ENCODE measurements at regions of chr2 and their contacts with region 1.

Region 1: DNA sequence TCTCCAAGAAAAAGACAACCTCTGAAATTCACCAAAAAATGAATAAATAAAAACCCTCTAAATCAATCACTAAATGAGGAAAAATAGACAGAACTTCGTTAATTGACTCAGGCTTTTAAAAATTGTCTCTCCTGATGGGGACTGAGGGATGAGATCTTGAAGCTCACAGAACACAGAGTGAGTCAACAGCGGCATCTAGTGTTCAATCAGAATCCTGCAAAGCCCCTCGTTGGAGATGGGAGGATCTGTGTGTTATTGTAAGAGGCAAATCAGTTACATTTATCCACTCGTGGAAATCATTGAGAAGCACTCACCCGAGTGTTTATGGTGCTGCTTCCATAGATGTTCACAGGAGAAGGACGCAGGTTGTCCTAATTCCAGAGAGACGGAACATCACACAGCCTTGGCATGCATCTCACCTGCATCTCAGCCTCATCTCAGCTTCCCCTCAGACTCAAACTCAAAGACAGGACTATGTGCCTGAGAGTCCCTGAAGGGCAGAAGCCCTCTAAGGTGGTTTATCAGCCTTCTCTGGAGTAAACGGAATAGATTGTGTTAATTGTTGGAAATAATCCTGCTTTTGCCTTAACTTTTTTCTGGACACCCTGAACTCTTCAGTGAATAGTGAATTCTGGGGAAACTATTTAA is 82.0 kb downstream of the MREG start:
- DNase-seq: peak; percentile 71
- H3K4me3 ChIP-seq: no peak overlapping the region
- H3K27ac ChIP-seq: no peak overlapping the region
- H3K4me1 ChIP-seq: no peaks in the 10 kb centered on the region
- CTCF ChIP-seq: peak; percentile 99

Region 2: DNA sequence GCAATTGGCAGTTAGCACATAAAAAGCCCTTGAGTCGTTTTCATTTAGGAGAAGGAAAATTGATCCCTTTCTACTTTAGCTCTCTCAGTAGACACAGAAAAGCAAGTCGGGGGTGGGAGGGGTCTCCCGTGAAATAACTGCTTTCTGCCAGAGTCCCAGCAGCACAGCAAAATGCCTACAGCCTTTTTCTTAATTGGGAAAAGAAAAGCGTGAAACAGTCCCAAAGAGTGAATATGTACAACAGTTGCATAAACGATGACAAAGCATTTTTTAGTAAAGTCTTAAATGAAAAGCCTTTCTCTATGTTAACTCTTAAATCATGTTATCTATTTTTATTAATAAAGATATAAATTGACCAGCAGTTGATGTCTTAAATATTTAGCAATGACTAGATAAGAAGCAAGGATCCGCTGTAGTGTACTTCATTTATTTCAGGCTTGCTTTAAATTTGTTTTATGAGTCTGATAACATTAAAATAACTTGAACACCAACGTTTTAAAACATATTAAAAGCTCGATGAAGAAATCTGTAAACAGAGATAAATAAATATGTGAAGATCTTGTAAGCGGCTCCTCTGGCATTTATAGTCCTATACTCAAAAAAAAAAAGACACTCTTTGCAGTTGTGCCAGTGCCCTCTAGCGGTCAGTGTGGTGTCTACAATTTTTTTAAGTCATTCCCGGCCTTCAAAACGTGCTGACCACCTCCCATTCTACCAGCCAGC is 661.8 kb before region 1 on chr2:
- CTCF ChIA-PET with region 1: no interaction called
- POLR2A ChIA-PET with region 1: no interaction called
- intact Hi-C with region 1: loop called (anchors 10 kb)
- DNase-seq: peak; percentile 70
- H3K4me3 ChIP-seq: no peak overlapping the region
- H3K27ac ChIP-seq: no peak overlapping the region
- H3K4me1 ChIP-seq: no peaks in the 10 kb centered on the region
- CTCF ChIP-seq: peak; percentile 97

Region 3: DNA sequence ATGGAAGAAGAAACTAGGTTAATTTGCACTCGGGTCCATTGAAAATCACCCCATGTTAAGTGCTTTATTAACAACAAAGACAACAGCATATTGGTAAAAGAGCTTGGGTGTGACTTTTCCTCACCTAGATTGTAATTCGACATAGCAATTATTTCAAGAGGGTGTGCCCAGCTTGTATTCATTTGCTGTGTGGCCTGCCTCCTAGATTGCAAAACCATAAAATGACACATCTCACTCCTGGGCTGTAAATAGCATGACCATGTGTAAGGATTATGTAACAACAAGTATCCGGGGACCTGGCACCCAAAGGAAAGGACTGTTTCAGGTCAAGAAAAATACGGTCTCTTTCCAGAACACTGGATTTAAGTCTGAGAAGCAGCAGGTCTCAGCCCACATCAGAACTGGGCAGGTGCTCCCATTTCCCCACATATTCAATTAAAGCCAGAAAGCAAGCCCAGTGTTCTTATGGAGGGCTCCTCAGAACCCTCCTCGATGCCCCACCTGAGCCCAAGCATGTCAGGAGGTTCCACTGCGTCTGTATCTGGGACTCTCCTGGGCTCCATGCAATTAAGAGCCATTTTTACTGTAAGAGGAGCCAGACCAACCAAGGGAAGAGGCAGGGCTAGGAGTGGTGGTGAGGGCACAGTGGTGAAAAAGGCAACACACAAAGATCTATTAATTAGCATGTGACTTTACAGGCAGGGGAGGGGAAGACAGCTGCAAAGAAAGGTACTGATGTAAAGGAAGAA is 42.7 kb after region 1 on chr2:
- CTCF ChIA-PET with region 1: no interaction called
- POLR2A ChIA-PET with region 1: no interaction called
- intact Hi-C with region 1: no loop called
- DNase-seq: no peak
- H3K4me3 ChIP-seq: no peak overlapping the region
- H3K27ac ChIP-seq: no peak overlapping the region
- H3K4me1 ChIP-seq: no peaks in the 10 kb centered on the region
- CTCF ChIP-seq: no peak

Measured in OCI-LY7 (cell line).